ENCODE measurements at regions of chr18 and their contacts with region 1.

Region 1: DNA sequence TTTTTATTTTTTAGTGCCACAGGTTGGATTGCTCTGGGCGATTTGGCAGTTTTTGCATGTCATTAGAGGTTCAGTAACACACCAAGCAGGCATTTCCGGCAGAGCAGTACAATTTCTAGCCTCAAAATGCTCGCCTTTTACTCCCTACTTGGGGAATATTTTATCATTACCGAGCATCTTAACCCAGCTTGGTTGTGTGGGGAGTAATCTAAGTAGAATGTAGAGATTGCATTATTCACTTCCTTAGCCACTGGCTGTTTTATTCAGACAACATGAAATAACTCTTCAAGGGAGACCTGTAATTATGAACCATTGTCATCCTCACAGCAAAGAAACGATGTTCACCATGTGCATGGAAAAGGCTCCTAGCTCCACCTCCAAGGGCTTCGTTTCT is 13.1 kb downstream of the GRP start:
- DNase-seq: no peak
- ATAC-seq: no peak
- H3K4me3 Mint-ChIP-seq: no peak overlapping the region
- H3K27ac Mint-ChIP-seq: no peak overlapping the region
- H3K4me1 Mint-ChIP-seq: 0 out of 2 replicates have a peak, but pooled peaks cover 3% of the 10 kb centered on the region
- H3K27me3 Mint-ChIP-seq: peaks cover 51% of the 10 kb centered on the region
- CTCF ChIP-seq: no peak

Region 2: DNA sequence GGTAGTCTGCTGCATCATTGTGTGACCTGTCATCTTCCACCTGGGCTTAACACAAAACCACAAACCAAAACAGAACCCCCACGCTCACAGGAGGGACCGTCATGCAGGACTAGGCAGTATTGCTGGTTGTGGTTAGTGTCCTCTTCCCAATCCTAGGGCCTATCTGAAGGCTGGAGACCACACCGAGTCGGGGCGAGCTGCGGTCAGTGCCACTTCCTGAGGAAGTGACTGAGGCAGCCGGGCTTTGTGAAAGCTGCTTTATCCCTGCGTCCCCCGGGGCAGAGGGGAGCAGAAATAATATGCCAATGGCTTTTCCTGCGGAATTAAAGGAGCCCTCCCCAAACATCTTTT is 345.4 kb before region 1 on chr18:
- CTCF ChIA-PET with region 1: no interaction called
- POLR2A ChIA-PET with region 1: no interaction called
- DNase-seq: no peak
- ATAC-seq: no peak
- H3K4me3 Mint-ChIP-seq: no peak overlapping the region
- H3K27ac Mint-ChIP-seq: peak overlapping the region; percentile 75
- H3K4me1 Mint-ChIP-seq: peaks cover 55% of the 10 kb centered on the region
- H3K27me3 Mint-ChIP-seq: no peaks in the 10 kb centered on the region
- CTCF ChIP-seq: no peak

Region 3: GRCh38 chr18:59085797-59086196 is 147.2 kb before region 1 on chr18:
- CTCF ChIA-PET with region 1: no interaction called
- POLR2A ChIA-PET with region 1: no interaction called
- DNase-seq: no peak
- ATAC-seq: no peak
- H3K4me3 Mint-ChIP-seq: no peak overlapping the region
- H3K27ac Mint-ChIP-seq: no peak overlapping the region
- H3K4me1 Mint-ChIP-seq: peaks cover 2% of the 10 kb centered on the region
- H3K27me3 Mint-ChIP-seq: peaks cover 10% of the 10 kb centered on the region
- CTCF ChIP-seq: no peak

Region 4: GRCh38 chr18:59220784-59221765 is 11.9 kb before region 1 on chr18:
- CTCF ChIA-PET with region 1: interaction called, 10 read pairs
- POLR2A ChIA-PET with region 1: interaction called, 4 read pairs
- DNase-seq: peak; percentile 41
- ATAC-seq: peak; percentile 41
- H3K4me3 Mint-ChIP-seq: peak overlapping the region; percentile 79
- H3K27ac Mint-ChIP-seq: no peak overlapping the region
- H3K4me1 Mint-ChIP-seq: peaks cover 19% of the 10 kb centered on the region
- H3K27me3 Mint-ChIP-seq: peaks cover 100% of the 10 kb centered on the region
- CTCF ChIP-seq: no peak

Region 5: GRCh38 chr18:59279193-59279592 is 46.2 kb after region 1 on chr18:
- CTCF ChIA-PET with region 1: no interaction called
- POLR2A ChIA-PET with region 1: no interaction called
- DNase-seq: no peak
- ATAC-seq: no peak
- H3K4me3 Mint-ChIP-seq: no peak overlapping the region
- H3K27ac Mint-ChIP-seq: no peak overlapping the region
- H3K4me1 Mint-ChIP-seq: peaks cover 21% of the 10 kb centered on the region
- H3K27me3 Mint-ChIP-seq: peaks cover 99% of the 10 kb centered on the region
- CTCF ChIP-seq: no peak

Region 6: DNA sequence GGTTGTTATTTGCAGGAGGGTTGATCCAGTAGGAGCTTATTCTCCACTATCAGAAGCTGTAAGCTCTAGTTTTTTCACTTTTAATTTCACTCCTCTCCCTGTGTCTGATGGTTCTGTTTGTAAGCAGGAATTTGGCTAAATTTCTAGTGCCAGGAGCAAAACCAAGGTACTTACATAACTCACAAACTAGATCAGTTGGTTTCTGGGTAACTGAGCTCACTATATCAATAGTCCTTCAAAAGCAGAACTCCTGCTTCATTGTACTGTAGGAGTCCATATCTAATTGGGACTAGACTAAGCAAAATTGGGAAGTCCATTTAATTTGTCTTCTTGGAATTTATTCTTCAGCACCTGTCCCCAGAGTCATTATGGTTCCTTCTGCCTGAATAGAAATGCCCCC is 60.3 kb after region 1 on chr18:
- CTCF ChIA-PET with region 1: no interaction called
- POLR2A ChIA-PET with region 1: no interaction called
- DNase-seq: no peak
- ATAC-seq: no peak
- H3K4me3 Mint-ChIP-seq: no peak overlapping the region
- H3K27ac Mint-ChIP-seq: no peak overlapping the region
- H3K4me1 Mint-ChIP-seq: peaks cover 3% of the 10 kb centered on the region; the same call in 1 of the 2 replicates
- H3K27me3 Mint-ChIP-seq: peaks cover 50% of the 10 kb centered on the region
- CTCF ChIP-seq: no peak